Endothelial cell of umbilical vein (primary cell): ENCODE measurements at regions of chr7 and their contacts with region 1.

Region 1: GRCh38 chr7:21945454-21946227 is at the start of gene CDCA7L:
- DNase-seq: peak; percentile 82
- H3K4me3 ChIP-seq: peak within 1 kb of the TSS; percentile 59 to 91 (median 80)
- H3K27ac ChIP-seq: peak within 1 kb of the TSS; percentile 91
- H3K4me1 ChIP-seq: peaks cover 52% of the 10 kb centered on the region
- H3K27me3 ChIP-seq: no peaks in the 10 kb centered on the region
- CTCF ChIP-seq: no peak
- POLR2A ChIP-seq: peak; percentile 92
- total RNA-seq, gene CDCA7L: 91.6 and 93.7 TPM in 2 replicates

Region 2: DNA sequence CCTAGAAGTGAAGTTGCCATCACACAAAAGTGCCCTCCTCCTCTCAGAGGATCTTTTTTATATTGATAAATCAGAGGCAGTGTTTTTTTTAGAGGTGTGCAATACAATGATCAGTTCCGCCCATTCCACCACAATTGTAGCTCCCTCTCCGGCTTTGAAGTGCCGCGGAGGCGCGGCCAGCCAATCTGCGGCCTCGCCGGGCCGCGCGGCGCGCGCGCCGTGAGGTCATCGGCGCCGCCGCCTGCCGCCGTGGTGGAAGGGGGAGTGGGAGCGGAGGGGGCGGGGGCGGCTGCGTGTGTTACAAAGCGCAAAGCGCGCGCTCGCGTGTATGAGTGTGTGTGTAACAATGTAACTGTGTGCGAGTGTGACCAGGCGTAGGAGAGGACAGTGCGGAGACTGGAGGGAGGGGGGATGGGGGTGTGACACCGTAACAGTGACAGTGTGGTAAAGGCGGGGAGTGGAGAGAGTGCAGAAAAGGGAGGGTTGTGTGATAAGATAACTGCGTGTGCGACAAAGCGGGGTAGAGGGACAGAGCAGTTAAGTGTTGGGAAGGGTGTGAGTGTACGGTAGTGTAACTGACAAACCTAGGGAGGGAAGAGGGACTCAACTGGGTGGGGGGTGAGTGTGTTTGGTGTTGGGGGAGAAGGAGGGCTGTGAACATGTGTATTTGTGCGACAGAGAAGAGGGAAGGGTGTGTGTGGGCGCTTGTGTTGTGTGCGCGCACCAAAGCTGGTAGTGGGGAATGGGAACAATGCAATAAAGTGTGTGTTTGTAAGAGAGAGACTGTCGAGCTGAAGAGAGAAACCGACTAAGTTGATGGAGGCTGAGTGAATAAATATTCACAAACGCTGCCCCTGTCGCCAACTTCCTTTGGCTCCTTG is 1158.6 kb before region 1 on chr7 and contains the start of gene SP8:
- CTCF ChIA-PET with region 1: no interaction called
- POLR2A ChIA-PET with region 1: no interaction called
- dilution Hi-C with region 1: no loop called
- intact Hi-C with region 1: loop called (anchors 10 kb)
- DNase-seq: peak; percentile 51
- H3K4me3 ChIP-seq: peak within 1 kb of the TSS; percentile 23 to 66 (median 38)
- H3K27ac ChIP-seq: no peak within 1 kb of the TSS
- H3K4me1 ChIP-seq: peaks cover 19% of the 10 kb centered on the region
- H3K27me3 ChIP-seq: peaks cover 74 to 97% of the 10 kb centered on the region in 2 experiments
- CTCF ChIP-seq: no peak
- POLR2A ChIP-seq: no peak
- total RNA-seq, gene SP8: 0.38 and 2.5 TPM in 2 replicates

Region 3: GRCh38 chr7:21960922-21961321 is 15.3 kb after region 1 on chr7:
- CTCF ChIA-PET with region 1: interaction called, 3 read pairs
- POLR2A ChIA-PET with region 1: interaction called, 3 read pairs
- dilution Hi-C with region 1: no loop called
- intact Hi-C with region 1: loop called (anchors 2 kb)
- DNase-seq: peak; percentile 80
- H3K4me3 ChIP-seq: no peak overlapping the region
- H3K27ac ChIP-seq: peak overlapping the region; percentile 41
- H3K4me1 ChIP-seq: peaks cover 10% of the 10 kb centered on the region
- H3K27me3 ChIP-seq: no peaks in the 10 kb centered on the region
- CTCF ChIP-seq: no peak
- POLR2A ChIP-seq: no peak